ENCODE measurements at regions of chr1 and their contacts with region 1.

Region 1: DNA sequence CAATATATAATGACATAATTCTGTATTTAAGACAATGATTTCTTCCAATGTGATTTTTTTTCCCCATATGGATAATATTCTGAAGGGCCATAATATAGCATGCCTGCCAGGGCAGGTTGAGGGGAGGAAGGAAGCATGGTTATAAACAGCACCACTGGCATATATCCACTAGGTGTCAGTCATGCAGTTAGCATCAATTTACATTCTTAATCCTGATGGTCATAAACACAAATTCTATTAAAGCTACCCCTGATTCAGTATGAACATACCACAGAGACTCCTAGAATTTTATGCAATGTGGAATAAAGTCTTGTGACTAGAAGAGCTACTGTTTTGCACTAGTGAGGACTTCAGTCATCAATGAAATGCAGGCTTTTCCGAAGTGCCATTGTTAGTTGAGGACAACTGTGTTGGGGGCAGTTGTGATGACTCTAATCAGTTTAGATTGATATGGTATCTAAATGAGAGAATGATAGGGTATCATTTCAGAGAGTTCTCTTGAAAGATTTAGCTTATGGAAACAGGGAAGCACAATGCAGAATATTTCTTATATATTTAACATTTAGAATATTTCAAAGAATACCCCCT is 342.7 kb upstream of the NR5A2 start:
- DNase-seq: no peak
- ATAC-seq: peak; percentile 50

Region 2: DNA sequence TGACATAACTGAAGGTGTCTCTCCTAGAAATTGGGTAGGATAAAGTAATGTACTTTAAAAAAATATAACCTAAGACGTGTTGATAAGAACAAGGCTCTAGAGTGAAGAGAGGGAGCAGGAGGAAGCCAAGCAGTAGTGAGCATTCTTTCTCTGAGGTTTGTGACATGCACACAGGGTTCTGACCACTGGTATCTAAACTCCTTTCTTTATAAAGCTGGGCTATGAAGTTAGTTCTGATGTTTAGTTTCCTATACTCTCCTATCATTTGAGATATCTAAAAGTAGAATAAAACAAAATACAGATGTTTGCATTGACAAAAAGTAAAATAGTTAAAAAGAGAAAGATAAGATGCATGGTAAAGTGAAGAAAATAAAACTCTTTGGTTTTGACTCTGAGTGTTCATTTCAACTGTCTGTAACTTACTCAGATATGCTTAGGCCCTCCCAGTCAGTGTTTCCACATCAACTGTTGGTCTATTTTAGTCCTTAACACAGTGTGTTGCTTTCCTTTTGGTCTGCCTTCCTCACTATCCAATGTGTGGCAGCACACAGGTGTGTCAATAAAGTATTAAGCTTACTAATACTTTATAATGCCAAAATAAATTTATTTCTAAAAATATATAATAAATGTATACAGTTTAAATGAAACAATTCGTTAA is 502.5 kb before region 1 on chr1:
- intact Hi-C with region 1: no loop called
- DNase-seq: no peak
- ATAC-seq: peak; percentile 89

Region 3: DNA sequence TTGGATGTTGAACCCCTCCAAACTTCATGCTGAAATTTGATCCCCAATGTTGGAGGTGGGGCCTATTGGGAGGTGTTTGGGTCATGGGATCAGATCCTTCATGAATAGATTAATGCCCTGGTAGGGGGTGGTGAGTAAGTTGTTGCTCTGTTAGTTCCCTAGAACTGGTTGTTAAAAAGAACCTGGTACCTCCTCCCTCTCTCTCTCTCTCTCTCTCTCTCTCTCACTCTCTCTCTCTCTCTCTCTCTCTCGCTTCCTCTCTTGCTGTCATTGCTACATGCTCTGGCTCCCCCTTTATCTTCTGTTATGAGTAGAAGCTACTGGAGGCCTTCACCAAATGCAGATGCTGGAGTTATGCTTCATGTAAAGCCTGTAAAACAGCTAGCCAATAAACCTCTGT is 155.5 kb before region 1 on chr1:
- intact Hi-C with region 1: no loop called
- DNase-seq: no peak
- ATAC-seq: no peak

Region 4: DNA sequence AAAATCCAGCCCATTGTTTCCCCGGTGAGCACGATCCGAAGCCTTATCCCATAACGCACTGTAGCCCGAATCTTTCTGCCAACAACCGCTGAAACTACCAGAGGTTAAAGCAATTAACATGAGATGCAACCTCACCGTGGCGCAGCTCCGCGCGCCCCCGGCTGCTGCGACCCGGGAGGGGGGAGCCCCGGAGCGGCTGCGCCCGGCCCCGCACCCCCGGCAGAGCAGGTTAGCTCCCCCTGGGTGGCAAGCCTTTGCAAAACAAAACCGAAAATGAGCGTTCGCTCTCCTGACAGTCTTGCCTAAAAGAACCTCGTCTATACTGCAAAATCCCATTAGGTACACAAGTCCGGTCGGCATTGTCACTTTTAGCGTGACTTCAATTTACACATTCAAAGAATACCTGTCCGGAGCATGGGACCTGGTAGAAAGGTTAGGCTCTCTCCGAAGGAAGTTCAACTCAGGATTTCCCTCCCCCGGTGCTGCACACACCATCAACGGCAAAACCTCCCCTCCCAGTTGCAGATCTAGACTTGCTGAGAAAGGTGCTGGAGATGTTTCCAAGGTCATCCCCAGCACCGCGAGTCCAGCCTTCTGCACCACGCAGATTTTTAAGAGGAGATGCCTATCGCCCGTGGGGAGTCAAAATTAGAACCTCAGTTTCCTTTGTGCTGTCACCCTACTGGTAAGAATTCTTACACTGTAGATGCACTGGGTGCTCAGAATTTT is 617.6 kb after region 1 on chr1:
- intact Hi-C with region 1: loop called (anchors 10 kb)
- DNase-seq: peak; percentile 39
- ATAC-seq: peak; percentile 78

Region 5: GRCh38 chr1:200488375-200489165 is 803.8 kb after region 1 on chr1:
- intact Hi-C with region 1: loop called (anchors 5 kb)
- DNase-seq: no peak
- ATAC-seq: peak; percentile 48

Measured in left ventricle myocardium superior (tissue), 1 donor.